ENCODE measurements at regions of chr22 and their contacts with region 1.

Region 1: DNA sequence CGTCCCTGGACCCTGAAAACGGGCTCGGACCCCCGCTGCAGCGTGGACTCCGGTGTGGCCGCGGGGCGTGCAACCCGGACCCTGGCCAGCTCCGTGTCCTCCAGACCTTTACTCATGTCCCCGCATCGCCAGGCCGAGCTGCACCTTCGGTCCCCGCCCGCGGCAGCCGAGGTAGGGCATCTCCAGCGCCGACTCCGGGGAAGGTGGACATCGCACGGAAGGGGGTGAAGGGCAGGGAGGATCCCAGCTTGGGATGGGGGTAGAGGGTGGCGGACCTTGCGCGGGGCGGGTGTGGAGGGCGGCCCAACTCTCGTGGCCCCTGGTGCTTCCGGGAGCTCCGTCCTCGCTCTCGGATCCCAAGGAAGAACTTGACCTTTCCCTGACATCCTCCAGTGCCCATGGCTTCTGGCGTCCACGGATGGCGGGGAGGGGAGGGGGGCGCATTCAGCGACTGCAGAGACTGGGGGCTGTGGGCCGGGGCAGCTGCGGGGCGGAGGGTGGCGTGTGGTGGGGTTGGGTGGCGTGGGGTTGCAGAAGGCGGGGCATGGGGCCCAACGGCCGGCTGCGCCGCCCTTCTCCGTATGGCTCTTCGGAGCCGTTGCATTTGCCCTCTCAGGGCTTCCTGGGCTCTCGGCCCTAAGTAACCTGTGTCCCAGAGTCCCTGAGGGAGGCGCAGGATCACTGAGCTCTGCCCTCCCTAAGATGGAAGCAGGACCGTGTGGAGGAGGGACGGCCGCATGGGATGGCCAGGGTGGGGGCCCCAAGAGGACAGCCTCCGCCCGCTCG is 9.5 kb upstream of the AIFM3 start:
- DNase-seq: peak; percentile 27 to 66
- ATAC-seq: peak; percentile 29 to 49 (median 35)
- H3K4me3 ChIP-seq: peak overlapping the region; percentile 68
- H3K27ac ChIP-seq: no peak overlapping the region
- H3K4me1 ChIP-seq: peaks cover 6% of the 10 kb centered on the region
- H3K27me3 ChIP-seq: no peaks in the 10 kb centered on the region
- CTCF ChIP-seq: no peak

Region 2: GRCh38 chr22:20885557-20886323 is 71.8 kb before region 1 on chr22:
- intact Hi-C with region 1: loop called in 1 of 2 experiments (anchors 5 kb)
- DNase-seq: peak; percentile 82 to 88
- ATAC-seq: peak; percentile 98 to 99 (median 98)
- H3K4me3 ChIP-seq: no peak overlapping the region
- H3K27ac ChIP-seq: peak overlapping the region; percentile 54
- H3K4me1 ChIP-seq: no peaks in the 10 kb centered on the region
- H3K27me3 ChIP-seq: no peaks in the 10 kb centered on the region
- CTCF ChIP-seq: peak; percentile 84

Region 3: GRCh38 chr22:20899827-20900423 is 57.6 kb before region 1 on chr22:
- intact Hi-C with region 1: no loop called
- DNase-seq: no peak
- ATAC-seq: no peak
- H3K4me3 ChIP-seq: no peak overlapping the region
- H3K27ac ChIP-seq: no peak overlapping the region
- H3K4me1 ChIP-seq: peaks cover 8% of the 10 kb centered on the region
- H3K27me3 ChIP-seq: no peaks in the 10 kb centered on the region
- CTCF ChIP-seq: no peak

Region 4: GRCh38 chr22:20916983-20917810 is 40.3 kb before region 1 on chr22 and contains the start of gene CRKL:
- intact Hi-C with region 1: loop called in 1 of 2 experiments (anchors 5 kb)
- DNase-seq: peak; percentile 97 to 99
- ATAC-seq: peak; percentile 97 to 99 (median 98)
- H3K4me3 ChIP-seq: peak within 1 kb of the TSS; percentile 100
- H3K27ac ChIP-seq: peak within 1 kb of the TSS; percentile 99
- H3K4me1 ChIP-seq: peaks cover 24% of the 10 kb centered on the region
- H3K27me3 ChIP-seq: no peaks in the 10 kb centered on the region
- CTCF ChIP-seq: peak; percentile 88
- total RNA-seq, gene CRKL: 66.0 to 81.0 (median 73.4) TPM

Measured in psoas muscle (tissue), 8 donors.